ENCODE measurements at regions of chr14 and their contacts with region 1.

Region 1: DNA sequence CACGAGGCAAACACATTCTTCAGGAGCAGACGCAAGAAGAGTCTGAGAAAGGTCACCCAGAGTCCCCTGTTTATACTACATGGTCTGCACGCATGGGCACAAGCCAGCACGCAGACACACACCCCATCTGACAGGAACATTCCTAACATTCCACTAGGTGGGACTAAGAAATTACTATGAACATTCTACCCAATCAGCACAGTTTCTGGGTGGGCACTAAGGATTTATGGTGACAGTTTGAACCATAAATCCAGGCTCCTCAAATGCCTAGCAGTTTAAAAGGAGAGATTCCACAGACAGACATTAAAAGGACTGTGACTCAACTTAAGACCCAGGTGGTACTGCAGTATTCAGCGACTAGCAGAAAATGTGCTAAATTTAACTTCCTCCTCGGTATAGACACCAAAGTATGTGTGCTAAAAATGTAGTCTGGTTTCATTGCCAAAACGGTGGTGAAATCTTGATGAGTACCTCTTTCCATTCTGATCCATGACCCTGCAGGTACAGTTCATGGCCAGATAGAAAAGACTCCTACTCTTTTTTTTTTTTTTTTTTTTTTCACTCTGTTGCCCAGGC is 16.2 kb downstream of the ABHD4 start:
- DNase-seq: peak; percentile 99
- H3K4me3 ChIP-seq: no peak overlapping the region
- H3K27ac ChIP-seq: peak overlapping the region; percentile 91
- H3K4me1 ChIP-seq: peaks cover 20% of the 10 kb centered on the region
- H3K27me3 ChIP-seq: no peaks in the 10 kb centered on the region
- CTCF ChIP-seq: no peak
- POLR2A ChIP-seq: peak; percentile 56

Region 2: DNA sequence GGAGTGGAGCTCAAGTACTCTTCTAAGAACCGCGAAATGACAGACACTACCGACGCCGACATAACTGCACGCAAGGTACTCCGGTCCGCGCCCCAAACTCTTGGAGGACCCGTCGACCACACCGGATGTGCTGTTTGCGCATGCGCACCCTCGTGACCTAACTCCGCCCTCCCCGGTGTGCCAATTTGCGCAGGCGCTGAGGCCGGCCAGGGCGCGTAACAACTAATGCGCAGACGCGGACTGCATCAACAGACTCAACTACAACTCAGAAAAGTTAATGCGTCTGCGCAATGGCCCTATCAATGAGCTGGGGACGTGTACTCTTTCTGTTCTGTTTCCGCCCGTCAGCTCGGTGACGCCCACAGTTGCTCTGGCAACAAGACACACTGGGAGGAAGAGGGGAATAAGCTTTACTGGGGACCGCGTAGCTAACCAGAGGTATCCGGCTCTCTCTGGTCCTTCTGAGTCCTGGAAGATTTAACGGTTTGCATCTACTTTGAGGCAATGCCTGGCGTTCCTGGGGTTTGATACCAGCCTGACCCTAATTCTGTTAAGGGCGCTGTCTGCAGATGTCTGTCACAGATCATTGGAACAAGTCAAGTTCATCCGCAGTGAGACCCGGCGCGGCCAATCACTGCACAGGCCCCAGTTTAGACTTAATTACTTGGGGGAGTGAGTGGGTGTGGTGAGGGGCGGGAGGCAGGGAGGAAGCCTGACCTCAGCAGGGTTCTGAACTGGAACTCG is 25.0 kb before region 1 on chr14 and contains the start of gene DAD1:
- CTCF ChIA-PET with region 1: no interaction called
- POLR2A ChIA-PET with region 1: no interaction called
- dilution Hi-C with region 1: no loop called
- intact Hi-C with region 1: loop called (anchors 1 kb)
- DNase-seq: peak; percentile 100
- H3K4me3 ChIP-seq: peak within 1 kb of the TSS; percentile 70 to 99 (median 92)
- H3K27ac ChIP-seq: peak within 1 kb of the TSS; percentile 84
- H3K4me1 ChIP-seq: peaks cover 23% of the 10 kb centered on the region
- H3K27me3 ChIP-seq: peaks cover 3 to 4% of the 10 kb centered on the region in 2 experiments
- CTCF ChIP-seq: no peak
- POLR2A ChIP-seq: peak; percentile 98
- total RNA-seq, gene DAD1: 299 and 304 TPM in 2 replicates

Region 3: GRCh38 chr14:22598099-22598899 is 16.0 kb before region 1 on chr14 and contains the start of gene ABHD4:
- CTCF ChIA-PET with region 1: interaction called, 3 read pairs
- POLR2A ChIA-PET with region 1: no interaction called
- dilution Hi-C with region 1: no loop called
- intact Hi-C with region 1: loop called (anchors 1 kb)
- DNase-seq: peak; percentile 79
- H3K4me3 ChIP-seq: peak within 1 kb of the TSS; percentile 56 to 68 (median 62)
- H3K27ac ChIP-seq: peak within 1 kb of the TSS; percentile 53
- H3K4me1 ChIP-seq: peaks cover 14% of the 10 kb centered on the region
- H3K27me3 ChIP-seq: peaks cover 0 to 5% of the 10 kb centered on the region in 2 experiments
- CTCF ChIP-seq: no peak
- POLR2A ChIP-seq: peak; percentile 44
- total RNA-seq, gene ABHD4: 22.4 and 34.8 TPM in 2 replicates

Region 4: DNA sequence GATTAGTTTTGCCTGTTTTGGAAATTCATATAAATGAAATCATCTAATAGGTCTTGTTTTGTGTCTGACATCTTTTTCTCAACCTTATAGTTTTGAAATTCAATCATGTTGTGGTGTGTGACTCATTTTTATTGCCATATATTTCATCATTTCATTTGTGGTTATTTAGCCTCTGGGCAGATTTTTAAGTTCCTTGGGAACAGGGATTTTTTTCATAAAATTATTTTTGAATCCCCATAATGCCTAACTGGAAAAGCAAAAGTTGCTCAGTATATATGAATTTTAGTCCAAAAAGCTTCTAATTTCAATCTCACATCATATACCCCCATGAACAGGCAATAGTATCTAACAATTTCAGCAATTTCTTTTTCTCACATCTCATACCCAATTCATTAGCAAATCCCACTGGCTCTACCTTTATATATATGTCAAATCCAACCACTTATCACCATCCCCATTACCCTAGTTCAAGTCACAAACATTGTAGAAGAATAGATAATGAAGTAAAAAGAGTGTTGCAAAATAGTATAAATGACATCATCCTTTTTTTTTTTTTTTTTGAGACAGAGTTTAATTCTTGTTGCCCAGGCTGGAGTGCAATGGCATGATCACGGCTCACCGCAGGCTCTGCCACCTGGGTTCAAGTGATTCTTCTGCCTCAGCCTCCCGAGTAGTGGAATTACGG is 32.4 kb after region 1 on chr14:
- CTCF ChIA-PET with region 1: no interaction called
- POLR2A ChIA-PET with region 1: interaction called, 10 read pairs
- dilution Hi-C with region 1: no loop called
- intact Hi-C with region 1: no loop called
- DNase-seq: no peak
- H3K4me3 ChIP-seq: no peak overlapping the region
- H3K27ac ChIP-seq: no peak overlapping the region
- H3K4me1 ChIP-seq: no peaks in the 10 kb centered on the region
- H3K27me3 ChIP-seq: no peaks in the 10 kb centered on the region
- CTCF ChIP-seq: no peak
- POLR2A ChIP-seq: no peak

Region 5: GRCh38 chr14:22689186-22689585 is 74.9 kb after region 1 on chr14:
- CTCF ChIA-PET with region 1: no interaction called
- POLR2A ChIA-PET with region 1: no interaction called
- dilution Hi-C with region 1: no loop called
- intact Hi-C with region 1: loop called (anchors 1 kb)
- DNase-seq: peak; percentile 96
- H3K4me3 ChIP-seq: no peak overlapping the region
- H3K27ac ChIP-seq: peak overlapping the region; percentile 91
- H3K4me1 ChIP-seq: peaks cover 32% of the 10 kb centered on the region
- H3K27me3 ChIP-seq: no peaks in the 10 kb centered on the region
- CTCF ChIP-seq: no peak
- POLR2A ChIP-seq: peak; percentile 40

Region 6: GRCh38 chr14:22699801-22700564 is 85.7 kb after region 1 on chr14:
- CTCF ChIA-PET with region 1: no interaction called
- POLR2A ChIA-PET with region 1: no interaction called
- dilution Hi-C with region 1: no loop called
- intact Hi-C with region 1: loop called (anchors 1 kb)
- DNase-seq: peak; percentile 80
- H3K4me3 ChIP-seq: no peak overlapping the region
- H3K27ac ChIP-seq: peak overlapping the region; percentile 57
- H3K4me1 ChIP-seq: peaks cover 23% of the 10 kb centered on the region
- H3K27me3 ChIP-seq: no peaks in the 10 kb centered on the region
- CTCF ChIP-seq: no peak
- POLR2A ChIP-seq: peak; percentile 62

Region 7: GRCh38 chr14:22739423-22739822 is 125.1 kb after region 1 on chr14:
- CTCF ChIA-PET with region 1: no interaction called
- POLR2A ChIA-PET with region 1: no interaction called
- dilution Hi-C with region 1: no loop called
- intact Hi-C with region 1: loop called (anchors 1 kb)
- DNase-seq: peak; percentile 88
- H3K4me3 ChIP-seq: no peak overlapping the region
- H3K27ac ChIP-seq: peak overlapping the region; percentile 97
- H3K4me1 ChIP-seq: peaks cover 30% of the 10 kb centered on the region
- H3K27me3 ChIP-seq: no peaks in the 10 kb centered on the region
- CTCF ChIP-seq: no peak
- POLR2A ChIP-seq: no peak